B cell (primary cell): ENCODE measurements at regions of chr6 and their contacts with region 1.

Region 1: DNA sequence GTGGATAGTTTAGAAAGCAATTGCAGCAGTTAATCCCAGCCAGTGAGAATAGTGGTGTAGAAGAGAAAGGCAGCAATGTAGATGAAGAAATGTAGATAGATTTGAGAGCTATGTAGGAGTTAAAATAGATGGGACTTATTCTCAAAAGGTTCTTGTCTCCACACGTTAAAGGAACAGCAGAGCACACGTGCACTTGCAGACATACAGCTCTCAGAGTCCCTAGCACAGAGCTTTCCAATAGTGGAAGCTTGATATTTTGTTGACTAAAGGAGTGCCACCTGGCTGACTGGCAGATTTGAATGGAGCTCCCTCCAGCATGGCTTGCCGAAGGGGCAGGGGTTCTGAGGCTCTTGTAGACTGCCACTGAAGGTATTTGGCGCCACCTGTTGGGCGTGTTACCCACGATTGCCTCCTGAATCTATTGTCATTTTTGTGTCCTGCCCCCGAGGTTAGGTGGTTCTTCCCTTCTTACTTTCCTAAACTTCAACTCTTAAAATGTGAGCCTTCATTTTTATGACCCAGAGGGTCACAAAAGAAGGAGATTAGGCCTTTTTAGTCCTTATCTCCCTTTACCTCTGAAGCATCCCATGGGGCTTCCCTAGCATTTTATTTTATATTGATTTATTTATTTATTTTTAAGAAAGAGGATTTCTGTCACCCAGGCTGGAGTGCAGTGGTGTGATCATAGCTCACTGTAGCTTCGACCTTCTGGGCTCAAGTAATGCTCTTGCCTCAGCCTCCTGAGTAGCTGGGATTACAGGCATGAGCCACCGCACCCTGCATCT is 16.4 kb downstream of the BRD2 start:
- DNase-seq: peak; percentile 92
- ATAC-seq: peak; percentile 95
- H3K4me3 ChIP-seq: no peak overlapping the region
- H3K4me3 Mint-ChIP-seq: no peak overlapping the region
- H3K27ac ChIP-seq: peak overlapping the region; percentile 13 to 60
- H3K27ac Mint-ChIP-seq: peak overlapping the region; percentile 28
- H3K4me1 ChIP-seq: peaks cover 17 to 19% of the 10 kb centered on the region in 2 donors
- H3K4me1 Mint-ChIP-seq: peaks cover 33% of the 10 kb centered on the region
- H3K27me3 ChIP-seq: no peaks in the 10 kb centered on the region
- H3K27me3 Mint-ChIP-seq: no peaks in the 10 kb centered on the region
- CTCF ChIP-seq: peak; percentile 91

Region 2: DNA sequence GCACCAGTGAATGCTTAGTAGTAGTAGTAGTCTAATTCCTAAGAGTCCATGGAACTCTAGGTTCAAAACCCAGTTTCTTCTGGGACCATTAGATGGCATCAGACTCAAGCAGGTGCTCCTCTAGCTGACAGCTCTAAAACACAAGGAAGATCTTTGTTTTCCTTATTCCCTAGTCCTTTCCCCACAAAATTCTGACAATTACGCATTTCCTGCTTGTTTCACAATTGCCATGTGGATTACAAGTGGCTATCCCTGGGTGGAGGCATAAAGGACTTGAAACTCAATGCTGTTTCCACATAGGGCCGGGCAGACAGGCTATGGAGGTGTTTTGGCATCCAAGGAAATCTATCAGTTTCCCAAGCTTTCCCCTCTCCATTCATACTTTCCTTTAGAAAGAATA is 158.8 kb before region 1 on chr6:
- CTCF ChIA-PET with region 1: interaction called, 10 read pairs
- POLR2A ChIA-PET with region 1: no interaction called
- intact Hi-C with region 1: no loop called
- DNase-seq: no peak
- ATAC-seq: no peak
- H3K4me3 ChIP-seq: no peak overlapping the region
- H3K4me3 Mint-ChIP-seq: no peak overlapping the region
- H3K27ac ChIP-seq: no peak overlapping the region
- H3K27ac Mint-ChIP-seq: no peak overlapping the region
- H3K4me1 ChIP-seq: peaks cover 11% of the 10 kb centered on the region in 2 donors
- H3K4me1 Mint-ChIP-seq: peaks cover 15% of the 10 kb centered on the region
- H3K27me3 ChIP-seq: no peaks in the 10 kb centered on the region
- H3K27me3 Mint-ChIP-seq: no peaks in the 10 kb centered on the region
- CTCF ChIP-seq: no peak

Region 3: DNA sequence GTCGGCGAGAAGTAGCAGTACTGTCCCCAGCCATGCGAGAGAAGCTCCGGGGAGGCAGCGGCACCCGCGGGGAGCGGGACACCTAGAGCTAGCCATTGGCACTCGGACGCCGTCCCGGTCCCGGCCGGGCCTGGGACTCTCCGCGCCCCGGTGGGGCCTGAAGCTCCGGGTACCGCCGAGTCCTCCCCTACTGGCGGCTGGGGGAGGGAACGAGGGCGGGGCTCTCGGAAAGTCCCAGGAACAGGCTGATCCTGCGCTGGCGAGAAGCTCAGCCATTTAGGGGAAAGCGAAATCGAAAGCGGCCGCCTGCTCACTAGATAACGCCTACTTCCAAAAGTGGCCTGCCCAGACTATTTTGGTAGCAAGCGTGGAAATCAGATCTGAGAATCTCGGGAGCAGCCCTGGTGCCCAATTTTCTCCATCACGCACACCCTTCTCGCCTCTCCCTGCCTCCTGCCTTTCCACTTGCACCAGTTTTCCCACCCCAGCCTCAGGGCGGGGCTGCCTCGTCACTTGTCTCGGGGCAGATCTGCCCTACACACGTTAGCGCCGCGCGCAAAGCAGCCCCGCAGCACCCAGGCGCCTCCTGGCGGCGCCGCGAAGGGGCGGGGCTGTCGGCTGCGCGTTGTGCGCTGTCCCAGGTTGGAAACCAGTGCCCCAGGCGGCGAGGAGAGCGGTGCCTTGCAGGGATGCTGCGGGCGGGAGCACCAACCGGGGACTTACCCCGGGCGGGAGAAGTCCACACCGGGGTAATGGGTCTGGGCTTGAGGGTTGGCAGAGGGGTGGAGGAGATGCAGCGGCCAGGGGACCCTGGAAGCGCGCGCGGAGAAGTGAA is 131.0 kb before region 1 on chr6 and contains the starts of genes PSMB9 and TAP1:
- CTCF ChIA-PET with region 1: interaction called, 52 read pairs
- POLR2A ChIA-PET with region 1: interaction called, 3 read pairs
- intact Hi-C with region 1: no loop called
- DNase-seq: peak; percentile 98
- ATAC-seq: peak; percentile 82
- H3K4me3 ChIP-seq: peak within 1 kb of the TSS; percentile 91 to 98 (median 94)
- H3K4me3 Mint-ChIP-seq: peak within 1 kb of the TSS; percentile 99
- H3K27ac ChIP-seq: peak within 1 kb of the TSS; percentile 98 to 99
- H3K27ac Mint-ChIP-seq: peak within 1 kb of the TSS; percentile 100
- H3K4me1 ChIP-seq: peaks cover 60 to 63% of the 10 kb centered on the region in 2 donors
- H3K4me1 Mint-ChIP-seq: peaks cover 75% of the 10 kb centered on the region
- H3K27me3 ChIP-seq: no peaks in the 10 kb centered on the region
- H3K27me3 Mint-ChIP-seq: no peaks in the 10 kb centered on the region
- CTCF ChIP-seq: peak; percentile 81
- total RNA-seq, gene PSMB9: 174 and 181 TPM in 2 replicates
- total RNA-seq, gene TAP1: 126 and 131 TPM in 2 replicates

Region 4: DNA sequence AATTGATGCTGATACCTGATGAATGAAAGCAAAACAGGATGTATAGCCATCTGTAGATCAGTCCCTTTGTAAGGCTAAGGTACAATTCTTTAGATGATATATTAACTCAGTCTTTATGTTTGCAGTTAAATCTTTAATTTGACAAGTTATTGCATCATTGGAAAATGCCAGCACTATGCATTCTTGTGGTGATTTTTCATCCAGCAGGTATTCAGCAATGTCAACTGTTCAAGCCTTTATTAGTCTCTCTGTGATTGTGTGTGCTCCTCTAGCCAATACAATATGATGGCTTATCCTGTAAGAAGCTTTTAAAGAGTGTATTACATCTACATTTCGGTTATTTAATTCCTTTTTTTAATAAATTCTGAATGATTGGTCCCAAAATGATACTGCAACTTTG is 78.3 kb before region 1 on chr6:
- CTCF ChIA-PET with region 1: interaction called, 24 read pairs
- POLR2A ChIA-PET with region 1: no interaction called
- intact Hi-C with region 1: no loop called
- DNase-seq: no peak
- ATAC-seq: no peak
- H3K4me3 ChIP-seq: no peak overlapping the region
- H3K4me3 Mint-ChIP-seq: no peak overlapping the region
- H3K27ac ChIP-seq: no peak overlapping the region
- H3K27ac Mint-ChIP-seq: no peak overlapping the region
- H3K4me1 ChIP-seq: peaks cover 0 to 6% of the 10 kb centered on the region in 2 donors
- H3K4me1 Mint-ChIP-seq: peaks cover 12% of the 10 kb centered on the region
- H3K27me3 ChIP-seq: no peaks in the 10 kb centered on the region
- H3K27me3 Mint-ChIP-seq: no peaks in the 10 kb centered on the region
- CTCF ChIP-seq: no peak

Region 5: GRCh38 chr6:32947552-32948465 is 37.0 kb before region 1 on chr6:
- CTCF ChIA-PET with region 1: interaction called, 822 read pairs
- POLR2A ChIA-PET with region 1: interaction called, 7 read pairs
- intact Hi-C with region 1: loop called (anchors 1 kb)
- DNase-seq: peak; percentile 76
- ATAC-seq: no peak
- H3K4me3 ChIP-seq: peak overlapping the region in 3 of 5 experiments; percentile 2 to 35 (median 6)
- H3K4me3 Mint-ChIP-seq: peak overlapping the region; percentile 84
- H3K27ac ChIP-seq: peak overlapping the region; percentile 97 to 98
- H3K27ac Mint-ChIP-seq: peak overlapping the region; percentile 92
- H3K4me1 ChIP-seq: peaks cover 80 to 94% of the 10 kb centered on the region in 2 donors
- H3K4me1 Mint-ChIP-seq: peaks cover 86% of the 10 kb centered on the region
- H3K27me3 ChIP-seq: no peaks in the 10 kb centered on the region
- H3K27me3 Mint-ChIP-seq: no peaks in the 10 kb centered on the region
- CTCF ChIP-seq: peak; percentile 70

Region 6: DNA sequence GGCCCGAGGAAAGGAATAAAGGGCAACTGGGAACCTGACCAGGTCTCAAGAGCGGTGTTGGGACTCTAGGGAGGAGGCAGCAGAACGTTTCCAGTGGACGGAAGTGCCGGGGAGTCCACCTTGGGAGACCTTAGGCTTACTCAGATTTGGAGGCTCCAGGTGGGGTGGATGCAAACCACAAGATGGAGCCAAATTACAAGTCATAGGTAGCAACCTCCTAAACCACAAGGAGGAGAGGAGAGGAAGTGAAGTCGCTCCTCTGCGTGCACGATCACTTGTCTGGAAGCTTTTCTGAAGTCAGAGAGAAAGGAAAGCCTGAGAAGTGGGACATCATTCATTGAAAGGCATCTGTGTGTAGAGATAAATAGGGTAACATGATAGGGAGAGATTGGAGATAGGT is 15.3 kb after region 1 on chr6:
- CTCF ChIA-PET with region 1: interaction called, 18 read pairs
- POLR2A ChIA-PET with region 1: no interaction called
- intact Hi-C with region 1: no loop called
- DNase-seq: peak; percentile 79
- ATAC-seq: peak; percentile 94
- H3K4me3 ChIP-seq: no peak overlapping the region
- H3K4me3 Mint-ChIP-seq: peak overlapping the region; percentile 11
- H3K27ac ChIP-seq: peak overlapping the region in 1 of 2 donors; percentile 31
- H3K27ac Mint-ChIP-seq: peak overlapping the region; percentile 53
- H3K4me1 ChIP-seq: peaks cover 10 to 13% of the 10 kb centered on the region in 2 donors
- H3K4me1 Mint-ChIP-seq: peaks cover 21% of the 10 kb centered on the region
- H3K27me3 ChIP-seq: no peaks in the 10 kb centered on the region
- H3K27me3 Mint-ChIP-seq: no peaks in the 10 kb centered on the region
- CTCF ChIP-seq: peak; percentile 70

Region 7: GRCh38 chr6:33029328-33030184 is 44.8 kb after region 1 on chr6:
- CTCF ChIA-PET with region 1: no interaction called
- POLR2A ChIA-PET with region 1: no interaction called
- intact Hi-C with region 1: no loop called
- DNase-seq: peak; percentile 96
- ATAC-seq: peak; percentile 75
- H3K4me3 ChIP-seq: peak overlapping the region in 4 of 5 experiments; percentile 25 to 51 (median 33)
- H3K4me3 Mint-ChIP-seq: peak overlapping the region; percentile 71
- H3K27ac ChIP-seq: peak overlapping the region; percentile 99
- H3K27ac Mint-ChIP-seq: peak overlapping the region; percentile 99
- H3K4me1 ChIP-seq: peaks cover 45 to 54% of the 10 kb centered on the region in 2 donors
- H3K4me1 Mint-ChIP-seq: peaks cover 63% of the 10 kb centered on the region
- H3K27me3 ChIP-seq: no peaks in the 10 kb centered on the region
- H3K27me3 Mint-ChIP-seq: no peaks in the 10 kb centered on the region
- CTCF ChIP-seq: no peak